ENCODE measurements at regions of chr16 and their contacts with region 1.

Region 1: GRCh38 chr16:52090080-52090479 is 456.9 kb downstream of the TOX3 start:
- DNase-seq: peak; percentile 67
- H3K4me3 Mint-ChIP-seq: no peak overlapping the region
- H3K27ac Mint-ChIP-seq: no peak overlapping the region
- H3K4me1 Mint-ChIP-seq: no peaks in the 10 kb centered on the region
- H3K27me3 Mint-ChIP-seq: peaks cover 92% of the 10 kb centered on the region
- CTCF ChIP-seq: no peak

Region 2: DNA sequence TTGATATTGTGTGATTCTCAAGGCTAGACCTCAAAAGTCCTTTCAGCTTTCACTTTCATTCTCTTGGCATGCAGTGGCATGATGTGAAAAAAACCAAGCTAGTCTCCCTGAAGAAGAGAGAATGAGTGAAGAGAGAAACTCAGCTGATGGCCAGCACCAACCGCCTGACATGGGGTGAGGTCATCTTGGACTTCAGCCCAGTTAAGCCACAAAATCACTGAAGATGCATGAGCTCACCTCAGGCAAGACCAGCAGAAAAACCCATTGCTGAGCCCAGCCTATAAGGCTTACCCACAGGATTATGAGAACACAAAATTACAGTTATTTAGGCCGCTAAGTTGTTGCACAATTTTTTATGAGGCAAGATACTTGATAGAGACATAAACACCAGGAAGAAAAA is 39.7 kb before region 1 on chr16:
- CTCF ChIA-PET with region 1: interaction called, 3 read pairs
- POLR2A ChIA-PET with region 1: interaction called, 4 read pairs
- intact Hi-C with region 1: loop called (anchors 1 kb)
- DNase-seq: peak; percentile 76
- H3K4me3 Mint-ChIP-seq: peak overlapping the region; percentile 36
- H3K27ac Mint-ChIP-seq: peak overlapping the region; percentile 84
- H3K4me1 Mint-ChIP-seq: peaks cover 10% of the 10 kb centered on the region
- H3K27me3 Mint-ChIP-seq: peaks cover 14% of the 10 kb centered on the region
- CTCF ChIP-seq: no peak

Measured in MCF 10A (cell line).